ENCODE measurements at regions of chr7 and their contacts with region 1.

Region 1: GRCh38 chr7:76507723-76508406 is 2.5 kb upstream of the UPK3B start:
- DNase-seq: no peak
- H3K4me3 ChIP-seq: no peak overlapping the region
- H3K27ac ChIP-seq: no peak overlapping the region
- H3K4me1 ChIP-seq: peaks cover under 1% of the 10 kb centered on the region
- H3K27me3 ChIP-seq: no peaks in the 10 kb centered on the region
- CTCF ChIP-seq: no peak
- EP300 ChIP-seq: no peak
- POLR2A ChIP-seq: no peak

Region 2: GRCh38 chr7:76383089-76383944 is 124.5 kb before region 1 on chr7:
- intact Hi-C with region 1: no loop called
- DNase-seq: no peak
- H3K4me3 ChIP-seq: no peak overlapping the region
- H3K27ac ChIP-seq: no peak overlapping the region
- H3K4me1 ChIP-seq: peaks cover 6% of the 10 kb centered on the region
- H3K27me3 ChIP-seq: no peaks in the 10 kb centered on the region
- CTCF ChIP-seq: no peak
- EP300 ChIP-seq: no peak
- POLR2A ChIP-seq: no peak

Region 3: GRCh38 chr7:76997381-76997780 is 489.5 kb after region 1 on chr7:
- intact Hi-C with region 1: loop called in 1 of 4 experiments (anchors 5 kb)
- DNase-seq: no peak
- H3K4me3 ChIP-seq: no peak overlapping the region
- H3K27ac ChIP-seq: no peak overlapping the region
- H3K4me1 ChIP-seq: no peaks in the 10 kb centered on the region
- H3K27me3 ChIP-seq: no peaks in the 10 kb centered on the region
- CTCF ChIP-seq: no peak
- EP300 ChIP-seq: no peak
- POLR2A ChIP-seq: no peak

Region 4: DNA sequence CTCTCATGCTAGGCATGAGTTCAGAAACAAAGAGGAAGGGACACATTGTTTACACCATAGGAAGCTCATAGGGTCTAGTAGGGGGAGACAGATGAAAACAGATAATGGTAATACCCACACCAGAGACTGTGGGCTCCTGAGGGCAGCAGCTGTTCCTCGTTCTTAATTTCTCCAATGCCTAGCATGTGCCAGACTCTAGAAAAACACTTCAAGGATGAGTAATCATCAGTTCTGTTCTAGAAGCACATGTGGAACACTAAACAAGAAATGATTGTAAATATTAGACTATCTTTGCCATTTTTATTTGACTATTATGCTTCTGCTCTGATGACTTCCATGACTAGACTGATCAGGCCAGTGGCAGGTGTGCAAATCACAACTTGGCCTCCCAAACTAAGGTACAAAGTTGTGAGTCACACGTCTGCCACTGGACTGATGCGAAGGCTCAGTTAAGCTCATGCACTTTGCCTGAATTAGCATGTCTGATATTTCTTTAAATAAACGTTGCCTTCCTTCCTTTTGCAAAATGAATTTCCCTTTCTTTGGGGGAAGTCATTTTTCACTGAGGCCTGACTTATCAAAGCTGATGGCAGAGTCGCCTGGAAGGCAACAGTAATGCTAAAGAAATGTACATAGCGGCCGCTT is 780.9 kb after region 1 on chr7:
- intact Hi-C with region 1: no loop called
- DNase-seq: no peak
- H3K4me3 ChIP-seq: no peak overlapping the region
- H3K27ac ChIP-seq: no peak overlapping the region
- H3K4me1 ChIP-seq: no peaks in the 10 kb centered on the region
- H3K27me3 ChIP-seq: no peaks in the 10 kb centered on the region
- CTCF ChIP-seq: no peak
- EP300 ChIP-seq: no peak
- POLR2A ChIP-seq: no peak

Measured in ovary (tissue), 10 donors.